ENCODE measurements at regions of chr2 and their contacts with region 1.

Region 1: DNA sequence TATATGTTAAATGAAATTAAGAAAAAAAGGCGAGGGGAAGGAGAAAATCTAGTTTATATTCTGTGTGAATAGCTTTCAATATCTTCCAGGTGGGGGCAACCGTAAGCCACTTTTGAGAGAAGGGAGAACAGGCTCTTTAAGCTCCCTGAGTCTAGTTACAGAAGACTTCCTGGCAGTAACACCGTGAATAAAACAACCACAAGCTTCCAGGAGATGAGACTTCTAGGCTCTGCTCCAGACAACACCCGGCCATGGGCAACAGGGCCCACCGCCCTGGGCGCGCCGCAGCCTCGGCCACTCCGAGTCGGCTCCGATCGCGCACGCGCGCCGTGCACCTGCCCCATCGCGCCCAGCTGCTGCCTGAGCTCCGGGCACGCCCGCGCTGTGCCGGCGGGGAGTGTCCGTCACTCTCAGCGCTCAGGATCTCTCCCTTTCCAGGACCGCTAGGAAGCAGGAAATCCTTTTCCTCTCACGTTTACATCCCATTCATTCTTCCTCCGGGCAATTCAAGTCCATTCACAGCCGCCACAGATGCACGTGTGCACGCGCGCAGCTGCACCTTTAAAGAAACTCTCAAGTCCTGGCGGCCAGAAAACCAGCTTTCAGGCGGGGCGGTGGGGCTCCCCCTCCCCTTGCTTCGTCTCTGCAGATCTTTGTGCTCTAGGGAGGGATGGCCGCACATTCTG is 19.4 kb upstream of the PAX3 start:
- DNase-seq: peak in 6 of 10 donors; percentile 20 to 90 (median 64)

Region 2: DNA sequence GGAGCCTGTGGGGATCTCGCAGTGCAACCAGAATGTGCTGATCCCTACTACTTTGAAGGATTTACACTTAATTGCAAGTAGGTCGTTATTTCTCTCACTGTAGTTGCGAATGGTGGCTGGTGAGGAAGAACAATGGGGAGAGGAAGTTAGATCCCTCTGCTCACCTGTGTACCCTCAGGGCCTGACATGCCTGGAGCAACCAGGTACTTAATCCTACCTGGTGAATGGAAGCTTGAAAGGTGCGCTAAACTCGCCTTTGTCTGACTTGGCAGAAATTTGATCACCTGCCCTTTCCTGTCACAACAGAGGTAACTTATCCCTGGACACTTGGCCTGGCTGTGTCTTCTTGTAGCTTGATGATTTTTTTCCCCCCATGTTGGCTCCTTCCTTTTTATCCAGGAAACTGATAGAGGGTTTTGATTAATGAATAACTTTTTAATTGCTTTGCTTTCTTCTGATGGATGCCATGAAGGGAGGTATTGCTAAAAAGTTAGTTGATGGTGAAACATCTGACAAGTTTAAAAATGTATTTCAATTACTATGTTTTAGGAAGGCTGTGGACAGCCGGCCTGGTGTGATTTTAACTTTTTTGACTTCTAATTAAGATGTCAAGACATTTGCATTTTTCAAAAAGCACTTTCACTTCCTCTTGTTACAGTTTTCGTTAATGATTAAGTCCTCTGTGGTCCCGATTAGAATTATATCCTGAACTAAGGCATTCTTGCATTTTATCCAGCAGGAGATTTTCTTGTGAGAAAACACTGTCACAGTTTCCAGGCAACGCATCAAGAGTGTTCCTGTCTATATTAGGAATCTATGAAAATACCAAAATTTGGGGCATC is 115.4 kb after region 1 on chr2:
- intact Hi-C with region 1: no loop called
- DNase-seq: no peak

Region 3: GRCh38 chr2:222561817-222562645 is 243.9 kb after region 1 on chr2:
- intact Hi-C with region 1: loop called (anchors 5 kb)
- DNase-seq: no peak

Region 4: DNA sequence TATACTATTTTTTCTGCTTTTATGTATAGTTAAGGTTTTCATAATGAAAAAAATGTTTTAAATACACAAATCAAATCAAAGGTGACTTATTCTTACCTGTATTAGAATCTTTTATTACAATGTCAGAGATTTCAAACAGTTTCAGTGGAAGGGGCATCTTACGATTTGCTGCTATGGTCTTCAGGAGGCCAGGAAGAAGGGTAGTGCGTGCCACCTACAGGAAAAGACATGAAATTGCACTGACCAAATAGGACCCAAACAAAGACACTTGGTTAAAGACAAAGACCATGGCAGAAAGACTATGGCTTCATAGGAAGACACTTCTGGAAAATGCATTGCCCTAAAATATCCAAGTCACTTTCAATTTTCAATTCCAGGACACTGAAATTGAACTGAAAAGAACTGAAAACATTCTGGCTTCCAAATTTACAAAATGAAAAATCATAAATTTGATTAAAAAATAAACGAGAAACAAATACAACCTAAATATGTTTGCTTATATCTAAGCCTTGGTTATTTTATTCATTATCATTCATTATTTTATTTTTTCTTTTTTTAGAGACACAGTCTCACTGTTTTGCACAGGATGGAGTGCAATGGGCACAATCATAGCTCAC is 295.7 kb after region 1 on chr2:
- intact Hi-C with region 1: loop called (anchors 2 kb)
- DNase-seq: peak in 1 of 10 donors; percentile 15